Gastrocnemius medialis (tissue), 4 donors: ENCODE measurements at regions of chr17 and their contacts with region 1.

Region 1: GRCh38 chr17:78865682-78866390 is 25.2 kb upstream of the USP36 start:
- DNase-seq: peak; percentile 61 to 77
- ATAC-seq: peak; percentile 67 to 85
- H3K4me3 ChIP-seq: peak overlapping the region in 1 of 4 donors; percentile 25
- H3K27ac ChIP-seq: no peak overlapping the region
- H3K4me1 ChIP-seq: peaks cover 0 to 4% of the 10 kb centered on the region in 2 donors
- H3K27me3 ChIP-seq: no peaks in the 10 kb centered on the region
- CTCF ChIP-seq: peak; percentile 82 to 93 (median 86)
- POLR2A ChIP-seq: no peak

Region 2: GRCh38 chr17:78674595-78675315 is 191.1 kb before region 1 on chr17:
- in situ Hi-C with region 1: no loop called
- intact Hi-C with region 1: no loop called
- DNase-seq: peak in 1 of 2 donors; percentile 48
- ATAC-seq: no peak
- H3K4me3 ChIP-seq: no peak overlapping the region
- H3K27ac ChIP-seq: peak overlapping the region; percentile 45 to 86 (median 55)
- H3K4me1 ChIP-seq: peaks cover 53 to 72% of the 10 kb centered on the region in 2 donors
- H3K27me3 ChIP-seq: no peaks in the 10 kb centered on the region
- CTCF ChIP-seq: no peak
- POLR2A ChIP-seq: no peak

Region 3: GRCh38 chr17:78965491-78965948 is 99.7 kb after region 1 on chr17:
- in situ Hi-C with region 1: loop called (anchors 5 kb)
- intact Hi-C with region 1: no loop called
- DNase-seq: no peak
- ATAC-seq: no peak
- H3K4me3 ChIP-seq: no peak overlapping the region
- H3K27ac ChIP-seq: no peak overlapping the region
- H3K4me1 ChIP-seq: no peaks in the 10 kb centered on the region
- H3K27me3 ChIP-seq: no peaks in the 10 kb centered on the region
- CTCF ChIP-seq: no peak
- POLR2A ChIP-seq: no peak

Region 4: DNA sequence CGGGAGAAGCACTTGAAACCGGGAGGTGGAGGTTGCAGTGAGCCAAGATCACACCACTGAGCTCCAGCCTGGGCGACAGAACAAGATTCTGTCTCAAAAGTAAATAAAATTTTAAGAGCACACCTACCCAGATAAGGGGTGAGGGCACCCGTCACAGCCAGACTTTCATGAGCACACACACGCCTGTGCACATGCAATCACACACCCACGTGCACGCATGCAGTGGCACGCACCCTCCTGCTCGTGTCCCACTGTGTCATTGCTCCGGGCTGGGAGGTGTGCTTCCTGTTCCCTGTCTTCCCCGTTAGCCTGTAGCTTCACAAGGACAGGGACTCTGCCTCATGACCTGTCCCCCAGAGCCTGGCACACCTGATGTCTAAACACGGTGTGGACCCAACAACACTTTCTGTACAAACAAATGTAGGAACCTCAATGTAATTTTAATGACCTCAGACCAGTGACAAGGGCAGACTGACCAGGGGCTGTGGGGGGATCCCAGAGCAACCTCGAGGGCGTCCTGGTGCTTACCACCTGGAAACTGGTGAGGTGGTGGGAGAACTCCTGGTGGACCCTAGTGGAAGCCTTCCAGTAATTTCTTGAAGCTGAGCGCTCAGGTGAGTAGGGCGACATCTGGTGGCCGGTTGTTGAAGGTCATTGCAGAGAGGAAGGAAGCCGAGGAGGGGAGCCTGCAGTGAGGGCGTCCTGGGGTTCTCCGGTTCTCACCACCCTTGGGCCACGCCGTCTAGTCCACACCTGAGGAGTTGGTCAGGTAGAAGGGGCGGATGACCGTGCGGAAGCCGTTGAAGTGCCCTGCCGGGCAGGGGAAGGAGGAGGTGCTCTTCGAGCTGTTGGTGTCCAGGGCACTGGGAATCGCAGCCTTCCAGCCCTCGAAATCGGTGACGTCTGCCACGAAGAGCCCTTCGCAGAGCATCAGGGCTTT is 105.3 kb after region 1 on chr17:
- in situ Hi-C with region 1: loop called (anchors 5 kb)
- intact Hi-C with region 1: loop called (anchors 1 kb)
- DNase-seq: peak; percentile 53 to 69
- ATAC-seq: peak; percentile 31 to 47
- H3K4me3 ChIP-seq: no peak overlapping the region
- H3K27ac ChIP-seq: peak overlapping the region in 1 of 4 donors; percentile 7
- H3K4me1 ChIP-seq: peaks cover 4 to 14% of the 10 kb centered on the region in 2 donors
- H3K27me3 ChIP-seq: no peaks in the 10 kb centered on the region
- CTCF ChIP-seq: peak; percentile 74 to 93 (median 93)
- POLR2A ChIP-seq: no peak